GM12878 (cell line): ENCODE measurements at regions of chr5 and their contacts with region 1.

Region 1: GRCh38 chr5:162654661-162655406 is 587.3 kb downstream of the GABRG2 start:
- DNase-seq: no peak
- ATAC-seq: peak; percentile 93
- H3K4me3 ChIP-seq: no peak overlapping the region
- H3K27ac ChIP-seq: no peak overlapping the region
- H3K4me1 ChIP-seq: no peaks in the 10 kb centered on the region
- H3K27me3 ChIP-seq: no peaks in the 10 kb centered on the region
- CTCF ChIP-seq: no peak
- EP300 ChIP-seq: peak; percentile 33 to 43; a peak in 2 of 4 replicates
- POLR2A ChIP-seq: no peak
- RAD21 ChIP-seq: no peak

Region 2: GRCh38 chr5:162641142-162641813 is 13.6 kb before region 1 on chr5:
- CTCF ChIA-PET with region 1: interaction called, 5 read pairs
- POLR2A ChIA-PET with region 1: no interaction called
- RAD21 ChIA-PET with region 1: no interaction called
- SMC1A ChIA-PET with region 1: interaction called, 10 read pairs
- in situ Hi-C with region 1: no loop called
- intact Hi-C with region 1: no loop called
- DNase-seq: no peak
- ATAC-seq: peak; percentile 86
- H3K4me3 ChIP-seq: no peak overlapping the region
- H3K27ac ChIP-seq: no peak overlapping the region
- H3K4me1 ChIP-seq: no peaks in the 10 kb centered on the region
- H3K27me3 ChIP-seq: no peaks in the 10 kb centered on the region
- CTCF ChIP-seq: no peak
- EP300 ChIP-seq: no peak
- POLR2A ChIP-seq: no peak
- RAD21 ChIP-seq: no peak

Region 3: GRCh38 chr5:162683280-162683679 is 28.4 kb after region 1 on chr5:
- CTCF ChIA-PET with region 1: no interaction called
- POLR2A ChIA-PET with region 1: no interaction called
- RAD21 ChIA-PET with region 1: no interaction called
- SMC1A ChIA-PET with region 1: no interaction called
- in situ Hi-C with region 1: no loop called
- intact Hi-C with region 1: no loop called
- DNase-seq: peak; percentile 8
- ATAC-seq: peak; percentile 94
- H3K4me3 ChIP-seq: no peak overlapping the region
- H3K27ac ChIP-seq: no peak overlapping the region
- H3K4me1 ChIP-seq: no peaks in the 10 kb centered on the region
- H3K27me3 ChIP-seq: no peaks in the 10 kb centered on the region
- CTCF ChIP-seq: no peak
- EP300 ChIP-seq: no peak
- POLR2A ChIP-seq: no peak
- RAD21 ChIP-seq: no peak

Region 4: DNA sequence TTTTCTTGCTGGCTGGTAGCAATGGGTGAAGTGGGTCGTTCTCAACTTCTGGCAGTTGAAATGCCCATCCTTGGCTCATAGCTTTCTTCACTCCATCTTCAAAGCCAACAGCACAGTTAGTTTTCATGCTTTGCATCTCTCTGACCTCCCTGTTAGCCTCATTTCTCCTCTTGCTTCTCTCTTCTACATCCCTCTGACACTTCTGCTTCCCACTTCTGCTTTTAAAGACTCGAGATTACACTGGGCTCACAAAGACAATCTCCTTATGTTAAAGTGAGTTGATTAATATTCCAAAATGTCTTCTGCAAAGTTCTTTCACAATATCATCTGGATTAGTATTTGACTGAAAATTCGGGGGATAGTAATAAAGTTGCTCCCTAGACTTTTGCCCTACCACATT is 97.8 kb after region 1 on chr5:
- CTCF ChIA-PET with region 1: no interaction called
- POLR2A ChIA-PET with region 1: no interaction called
- RAD21 ChIA-PET with region 1: no interaction called
- SMC1A ChIA-PET with region 1: no interaction called
- in situ Hi-C with region 1: no loop called
- intact Hi-C with region 1: no loop called
- DNase-seq: no peak
- ATAC-seq: peak; percentile 55
- H3K4me3 ChIP-seq: no peak overlapping the region
- H3K27ac ChIP-seq: no peak overlapping the region
- H3K4me1 ChIP-seq: no peaks in the 10 kb centered on the region
- H3K27me3 ChIP-seq: no peaks in the 10 kb centered on the region
- CTCF ChIP-seq: no peak
- EP300 ChIP-seq: no peak
- POLR2A ChIP-seq: no peak
- RAD21 ChIP-seq: no peak

Region 5: DNA sequence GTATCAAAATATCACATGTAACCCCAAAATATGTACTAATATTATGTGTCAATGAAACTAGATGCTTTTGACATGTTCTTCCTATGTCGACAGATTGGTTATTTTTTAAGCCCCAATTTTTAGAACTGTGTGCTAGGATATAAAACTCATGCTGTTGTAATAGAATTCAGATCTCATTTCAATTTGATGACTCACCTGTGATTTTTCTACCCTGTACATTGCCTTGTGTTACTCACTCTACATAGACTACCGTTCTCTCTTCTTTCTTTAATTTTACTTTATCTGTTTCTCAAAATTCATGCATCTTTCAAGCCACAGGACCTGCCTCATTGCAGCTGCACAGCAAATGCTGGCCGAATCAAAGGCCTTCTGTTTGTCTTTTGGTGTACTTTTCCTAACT is 1135.0 kb after region 1 on chr5:
- CTCF ChIA-PET with region 1: no interaction called
- POLR2A ChIA-PET with region 1: no interaction called
- RAD21 ChIA-PET with region 1: no interaction called
- SMC1A ChIA-PET with region 1: no interaction called
- in situ Hi-C with region 1: no loop called
- intact Hi-C with region 1: no loop called
- DNase-seq: no peak
- ATAC-seq: no peak
- H3K4me3 ChIP-seq: no peak overlapping the region
- H3K27ac ChIP-seq: no peak overlapping the region
- H3K4me1 ChIP-seq: no peaks in the 10 kb centered on the region
- H3K27me3 ChIP-seq: no peaks in the 10 kb centered on the region
- CTCF ChIP-seq: no peak
- EP300 ChIP-seq: no peak
- POLR2A ChIP-seq: no peak
- RAD21 ChIP-seq: no peak